ENCODE measurements at regions of chr10 and their contacts with region 1.

Region 1: GRCh38 chr10:122112625-122113160 is 123.7 kb downstream of the TACC2 start:
- DNase-seq: peak; percentile 86
- ATAC-seq: peak; percentile 74
- H3K4me3 ChIP-seq: peak overlapping the region; percentile 87
- H3K27ac ChIP-seq: peak overlapping the region; percentile 99
- H3K4me1 ChIP-seq: peaks cover 32% of the 10 kb centered on the region
- H3K27me3 ChIP-seq: no peaks in the 10 kb centered on the region
- CTCF ChIP-seq: peak; percentile 43; the same call in 1 of the 2 replicates

Region 2: DNA sequence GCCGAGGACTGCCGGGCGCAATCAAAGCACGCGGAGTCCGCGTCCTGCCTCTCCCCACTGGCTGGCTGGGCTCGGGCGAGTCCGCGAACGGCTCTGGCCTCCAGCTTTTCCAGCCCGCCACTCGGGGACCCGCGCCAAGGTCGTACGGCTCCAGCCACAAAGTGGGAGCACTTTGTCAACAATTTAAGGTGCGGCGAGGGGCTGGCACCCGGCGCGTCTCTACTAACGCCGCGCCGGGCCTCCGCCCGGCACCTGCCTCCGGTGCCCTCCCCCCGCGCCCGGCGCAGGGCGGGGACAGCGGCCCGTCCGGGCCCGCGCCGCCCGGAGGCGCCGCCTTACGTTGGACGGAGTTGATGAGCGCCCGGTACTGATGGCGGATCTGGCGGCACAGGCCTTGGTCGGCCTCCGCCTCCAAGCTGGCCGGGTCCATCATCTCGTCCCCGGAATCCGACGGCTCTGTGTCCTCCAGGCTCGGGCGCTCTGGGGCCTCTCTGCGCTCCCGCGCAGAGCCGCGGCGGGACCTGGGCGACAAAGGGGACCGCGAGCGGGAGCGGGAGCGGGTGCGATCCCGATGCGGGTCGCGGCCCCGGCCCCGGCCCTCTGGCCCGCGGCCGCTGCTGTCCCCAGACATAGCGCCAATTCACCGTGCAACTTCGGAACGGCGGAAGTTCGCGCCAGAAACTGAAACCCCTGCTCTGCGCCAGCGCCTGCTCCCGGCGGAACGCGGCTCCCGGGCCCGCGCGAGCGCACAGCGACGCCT is 138.0 kb before region 1 on chr10 and contains the start of gene NSMCE4A:
- CTCF ChIA-PET with region 1: interaction called, 3 read pairs
- POLR2A ChIA-PET with region 1: interaction called, 4 read pairs
- intact Hi-C with region 1: loop called (anchors 2 kb)
- DNase-seq: peak; percentile 71
- ATAC-seq: peak; percentile 81
- H3K4me3 ChIP-seq: peak within 1 kb of the TSS; percentile 90
- H3K27ac ChIP-seq: peak within 1 kb of the TSS; percentile 90
- H3K4me1 ChIP-seq: peaks cover 7% of the 10 kb centered on the region; the same call in 1 of the 2 replicates
- H3K27me3 ChIP-seq: no peaks in the 10 kb centered on the region
- CTCF ChIP-seq: peak; percentile 72
- total RNA-seq, gene NSMCE4A: 46.3 and 47.3 TPM in 2 replicates

Region 3: GRCh38 chr10:122062831-122063674 is 49.6 kb before region 1 on chr10:
- CTCF ChIA-PET with region 1: interaction called, 5 read pairs
- POLR2A ChIA-PET with region 1: interaction called, 4 read pairs
- intact Hi-C with region 1: loop called (anchors 2 kb)
- DNase-seq: peak; percentile 90
- ATAC-seq: peak; percentile 96
- H3K4me3 ChIP-seq: no peak overlapping the region
- H3K27ac ChIP-seq: peak overlapping the region; percentile 97
- H3K4me1 ChIP-seq: peaks cover 19% of the 10 kb centered on the region
- H3K27me3 ChIP-seq: no peaks in the 10 kb centered on the region
- CTCF ChIP-seq: no peak

Region 4: DNA sequence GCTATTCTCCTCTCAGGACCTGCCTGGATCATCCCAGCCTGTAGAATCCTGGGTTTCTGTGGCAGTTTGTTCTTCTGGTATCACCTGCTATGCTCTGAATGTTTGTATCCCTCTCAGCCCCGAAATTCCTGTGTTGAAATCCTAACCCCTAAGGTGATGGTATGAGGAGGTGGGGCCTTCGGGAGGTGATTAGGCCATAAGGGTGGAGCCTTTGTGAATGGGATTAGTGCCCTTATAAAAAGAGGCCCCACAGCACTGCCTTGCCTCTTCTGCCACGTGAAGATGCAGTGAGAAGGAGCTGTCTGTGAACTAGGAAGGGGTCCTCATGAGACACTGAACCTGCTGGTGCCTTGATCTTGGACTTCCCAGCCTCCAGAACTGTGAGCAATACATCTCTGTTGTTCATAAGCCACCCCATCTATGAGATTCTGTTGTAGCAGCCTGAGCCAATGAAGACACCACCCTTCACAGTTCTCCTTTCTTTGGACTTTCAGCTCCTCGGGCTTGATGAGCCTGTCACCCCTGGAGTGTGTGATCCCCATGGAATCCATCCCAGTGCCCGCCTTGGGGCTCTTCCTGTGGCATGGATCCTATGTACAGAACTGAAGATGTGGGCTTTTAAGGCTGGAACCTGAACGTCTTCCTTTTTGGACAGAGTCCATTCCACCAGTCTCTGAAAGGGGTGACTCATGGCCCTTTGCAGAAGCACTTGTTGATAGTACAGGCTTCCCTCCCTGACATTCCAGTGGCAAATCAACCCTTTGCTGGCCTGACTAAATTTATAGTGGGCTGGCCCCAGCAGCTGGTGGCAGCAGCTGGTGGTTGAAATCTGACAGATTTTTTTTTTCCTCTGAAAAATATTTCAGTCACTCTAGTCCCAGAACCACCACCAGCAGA is 14.3 kb after region 1 on chr10:
- CTCF ChIA-PET with region 1: no interaction called
- POLR2A ChIA-PET with region 1: interaction called, 3 read pairs
- intact Hi-C with region 1: loop called (anchors 1 kb)
- DNase-seq: peak; percentile 88
- ATAC-seq: peak; percentile 95
- H3K4me3 ChIP-seq: peak overlapping the region; percentile 51; the same call in 1 of the 2 replicates
- H3K27ac ChIP-seq: peak overlapping the region; percentile 53
- H3K4me1 ChIP-seq: peaks cover 22% of the 10 kb centered on the region
- H3K27me3 ChIP-seq: no peaks in the 10 kb centered on the region
- CTCF ChIP-seq: no peak

Region 5: GRCh38 chr10:122172317-122173008 is 59.8 kb after region 1 on chr10:
- CTCF ChIA-PET with region 1: no interaction called
- POLR2A ChIA-PET with region 1: no interaction called
- intact Hi-C with region 1: no loop called
- DNase-seq: no peak
- ATAC-seq: no peak
- H3K4me3 ChIP-seq: no peak overlapping the region
- H3K27ac ChIP-seq: no peak overlapping the region
- H3K4me1 ChIP-seq: no peaks in the 10 kb centered on the region
- H3K27me3 ChIP-seq: no peaks in the 10 kb centered on the region
- CTCF ChIP-seq: no peak

Measured in PC-3 (cell line).